Caco-2 (cell line): ENCODE measurements at regions of chr4 and their contacts with region 1.

Region 1: DNA sequence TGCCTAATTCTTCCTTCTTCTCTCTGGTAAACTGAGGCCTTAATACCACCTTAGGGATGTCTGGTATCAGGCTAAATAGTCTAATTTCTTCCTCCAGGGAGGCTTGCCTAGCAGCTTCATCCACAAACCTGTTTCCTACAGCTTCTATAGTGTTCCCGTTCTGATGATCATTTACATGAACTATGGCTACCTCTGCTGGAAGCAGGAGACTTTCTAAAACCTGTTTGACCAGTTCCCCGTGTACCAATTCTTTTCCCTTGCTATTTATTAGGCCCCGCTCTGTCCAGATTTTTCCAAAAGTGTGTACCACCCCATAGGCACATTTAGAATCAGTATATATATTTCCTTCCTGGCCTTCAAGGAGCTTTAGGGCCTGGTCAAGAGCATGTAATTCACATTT is 5.8 kb upstream of the USP38 start:
- DNase-seq: peak; percentile 44 to 68
- H3K4me3 ChIP-seq: no peak overlapping the region
- H3K4me3 Mint-ChIP-seq: no peak overlapping the region
- H3K27ac Mint-ChIP-seq: no peak overlapping the region
- H3K4me1 ChIP-seq: peaks cover 17% of the 10 kb centered on the region
- H3K4me1 Mint-ChIP-seq: peaks cover 14% of the 10 kb centered on the region
- H3K27me3 ChIP-seq: no peaks in the 10 kb centered on the region
- H3K27me3 Mint-ChIP-seq: no peaks in the 10 kb centered on the region
- CTCF ChIP-seq: peak in 1 of 2 experiments; percentile 32

Region 2: DNA sequence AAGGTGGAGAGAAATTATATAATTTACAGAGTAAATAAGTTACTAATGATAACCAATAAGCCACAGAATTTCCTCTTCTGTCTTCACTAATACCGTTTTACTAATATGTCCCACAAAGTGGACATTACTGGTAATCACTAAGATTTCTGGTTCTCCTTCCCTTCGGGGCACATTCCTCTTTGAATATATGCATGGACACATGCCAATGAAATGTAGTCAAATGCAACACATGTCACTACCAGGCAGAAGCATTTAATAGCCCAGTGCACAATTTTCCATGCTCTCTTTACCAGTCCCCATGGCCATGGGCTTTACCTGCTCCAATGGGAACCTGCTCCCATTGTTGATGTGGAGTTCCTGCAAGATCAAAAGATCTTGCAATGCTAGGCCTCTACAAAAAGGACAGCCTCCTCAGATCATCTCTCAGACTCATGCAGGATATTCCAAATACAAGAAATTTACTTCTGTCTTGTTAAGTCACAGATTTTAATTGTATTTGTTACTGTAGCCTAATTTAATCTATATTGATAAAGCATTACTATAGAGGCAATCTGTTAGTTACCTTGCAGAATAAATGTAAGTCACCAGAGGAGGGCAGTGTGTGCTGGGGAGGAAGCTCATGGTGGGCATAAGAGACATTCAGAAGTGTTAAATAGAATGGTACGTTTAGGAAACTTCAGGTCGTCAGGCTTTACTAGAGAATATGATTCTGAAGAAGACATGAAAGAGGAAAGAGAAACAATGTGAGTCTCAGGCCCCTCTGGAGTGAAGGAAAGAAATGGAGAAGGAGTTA is 295.7 kb before region 1 on chr4:
- CTCF ChIA-PET with region 1: interaction called, 3 read pairs
- POLR2A ChIA-PET with region 1: no interaction called
- intact Hi-C with region 1: loop called (anchors 1 kb)
- DNase-seq: peak in 1 of 2 experiments; percentile 15
- H3K4me3 ChIP-seq: no peak overlapping the region
- H3K4me3 Mint-ChIP-seq: no peak overlapping the region
- H3K27ac Mint-ChIP-seq: no peak overlapping the region
- H3K4me1 ChIP-seq: no peaks in the 10 kb centered on the region
- H3K4me1 Mint-ChIP-seq: no peaks in the 10 kb centered on the region
- H3K27me3 ChIP-seq: no peaks in the 10 kb centered on the region
- H3K27me3 Mint-ChIP-seq: no peaks in the 10 kb centered on the region
- CTCF ChIP-seq: peak; percentile 22 to 37

Region 3: GRCh38 chr4:142984871-142985585 is 193.9 kb before region 1 on chr4:
- CTCF ChIA-PET with region 1: interaction called, 28 read pairs
- POLR2A ChIA-PET with region 1: no interaction called
- intact Hi-C with region 1: loop called (anchors 1 kb)
- DNase-seq: peak in 1 of 2 experiments; percentile 64
- H3K4me3 ChIP-seq: no peak overlapping the region
- H3K4me3 Mint-ChIP-seq: no peak overlapping the region
- H3K27ac Mint-ChIP-seq: no peak overlapping the region
- H3K4me1 ChIP-seq: no peaks in the 10 kb centered on the region
- H3K4me1 Mint-ChIP-seq: peaks cover 13% of the 10 kb centered on the region
- H3K27me3 ChIP-seq: no peaks in the 10 kb centered on the region
- H3K27me3 Mint-ChIP-seq: no peaks in the 10 kb centered on the region
- CTCF ChIP-seq: peak; percentile 61 to 71